ENCODE measurements at regions of chr11 and their contacts with region 1.

Region 1: DNA sequence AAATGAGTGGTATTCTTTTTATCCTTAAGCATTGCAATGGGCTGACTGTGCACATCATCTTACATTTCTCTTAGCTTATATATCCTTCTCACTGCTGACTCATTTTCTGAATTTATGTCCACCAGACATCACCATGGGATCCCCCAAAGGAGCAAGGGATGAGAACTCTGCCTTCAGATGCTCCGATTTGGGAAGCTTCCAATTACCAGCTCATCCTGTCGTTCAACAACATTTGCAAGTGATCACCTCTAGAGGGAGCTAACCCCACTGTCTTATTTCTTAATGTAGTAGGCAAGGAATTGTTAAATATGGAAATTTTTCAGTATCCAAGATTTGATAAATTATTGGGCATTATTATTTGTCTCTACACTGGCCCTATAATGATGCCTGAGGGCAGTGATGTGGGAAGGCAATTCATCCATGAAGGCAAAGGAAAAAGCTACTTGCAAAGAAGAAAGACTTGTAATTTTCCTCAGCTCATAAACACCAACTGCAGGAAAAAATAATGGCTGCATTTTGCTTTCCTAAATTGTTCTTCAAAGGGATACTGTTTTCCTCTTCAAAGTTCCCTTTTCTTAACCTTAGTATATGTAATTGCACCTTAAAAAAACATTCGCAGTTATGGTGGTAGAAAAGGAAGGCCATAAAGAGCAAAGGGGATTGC is 102.4 kb upstream of the FSHB start:
- DNase-seq: peak in 1 of 2 experiments; percentile 25
- H3K4me3 ChIP-seq: no peak overlapping the region
- H3K4me3 Mint-ChIP-seq: no peak overlapping the region
- H3K27ac Mint-ChIP-seq: no peak overlapping the region
- H3K4me1 ChIP-seq: no peaks in the 10 kb centered on the region
- H3K4me1 Mint-ChIP-seq: peaks cover 5% of the 10 kb centered on the region
- H3K27me3 ChIP-seq: no peaks in the 10 kb centered on the region
- H3K27me3 Mint-ChIP-seq: peaks cover 2% of the 10 kb centered on the region
- CTCF ChIP-seq: peak in 1 of 2 experiments; percentile 66

Region 2: DNA sequence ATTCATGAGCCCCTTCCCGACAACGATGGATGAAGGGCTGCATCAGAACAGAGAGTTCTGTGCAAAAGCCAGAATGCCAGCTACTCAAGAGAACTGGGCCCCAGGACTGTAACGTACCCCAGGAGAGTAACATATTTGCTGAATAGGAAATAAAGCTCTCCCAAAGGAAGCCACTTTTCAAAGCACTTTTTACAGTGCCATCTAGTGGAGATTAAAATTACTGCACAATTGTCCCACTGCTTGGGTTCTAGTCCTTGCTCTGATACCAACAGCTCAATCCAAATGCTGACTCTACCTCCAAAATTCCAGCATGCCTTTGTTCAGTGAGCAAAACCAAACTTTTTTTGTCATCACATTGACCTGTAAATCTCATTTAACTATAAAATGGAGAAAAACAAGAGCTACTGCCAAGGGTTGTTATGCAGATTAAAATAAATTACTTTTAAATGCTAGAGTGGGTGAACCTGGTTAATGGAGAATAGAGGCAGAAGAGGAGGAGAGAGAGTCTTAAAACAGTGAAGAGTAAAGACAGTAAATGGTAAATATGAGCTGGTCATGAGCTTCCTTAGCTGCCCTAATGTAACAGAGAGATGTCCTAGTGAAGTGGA is 14.8 kb after region 1 on chr11:
- CTCF ChIA-PET with region 1: interaction called, 15 read pairs
- POLR2A ChIA-PET with region 1: no interaction called
- intact Hi-C with region 1: no loop called
- DNase-seq: peak in 1 of 2 experiments; percentile 58
- H3K4me3 ChIP-seq: no peak overlapping the region
- H3K4me3 Mint-ChIP-seq: no peak overlapping the region
- H3K27ac Mint-ChIP-seq: no peak overlapping the region
- H3K4me1 ChIP-seq: no peaks in the 10 kb centered on the region
- H3K4me1 Mint-ChIP-seq: no peaks in the 10 kb centered on the region
- H3K27me3 ChIP-seq: no peaks in the 10 kb centered on the region
- H3K27me3 Mint-ChIP-seq: no peaks in the 10 kb centered on the region
- CTCF ChIP-seq: peak; percentile 53 to 72

Region 3: GRCh38 chr11:30196400-30197206 is 68.2 kb after region 1 on chr11:
- CTCF ChIA-PET with region 1: interaction called, 19 read pairs
- POLR2A ChIA-PET with region 1: no interaction called
- intact Hi-C with region 1: loop called (anchors 1 kb)
- DNase-seq: peak; percentile 65 to 70
- H3K4me3 ChIP-seq: no peak overlapping the region
- H3K4me3 Mint-ChIP-seq: no peak overlapping the region
- H3K27ac Mint-ChIP-seq: no peak overlapping the region
- H3K4me1 ChIP-seq: no peaks in the 10 kb centered on the region
- H3K4me1 Mint-ChIP-seq: no peaks in the 10 kb centered on the region
- H3K27me3 ChIP-seq: no peaks in the 10 kb centered on the region
- H3K27me3 Mint-ChIP-seq: no peaks in the 10 kb centered on the region
- CTCF ChIP-seq: peak; percentile 75 to 88

Region 4: GRCh38 chr11:30314625-30315024 is 186.2 kb after region 1 on chr11:
- CTCF ChIA-PET with region 1: interaction called, 3 read pairs
- POLR2A ChIA-PET with region 1: no interaction called
- intact Hi-C with region 1: loop called (anchors 1 kb)
- DNase-seq: no peak
- H3K4me3 ChIP-seq: no peak overlapping the region
- H3K4me3 Mint-ChIP-seq: no peak overlapping the region
- H3K27ac Mint-ChIP-seq: no peak overlapping the region
- H3K4me1 ChIP-seq: no peaks in the 10 kb centered on the region
- H3K4me1 Mint-ChIP-seq: no peaks in the 10 kb centered on the region
- H3K27me3 ChIP-seq: no peaks in the 10 kb centered on the region
- H3K27me3 Mint-ChIP-seq: no peaks in the 10 kb centered on the region
- CTCF ChIP-seq: peak; percentile 48 to 53

Region 5: DNA sequence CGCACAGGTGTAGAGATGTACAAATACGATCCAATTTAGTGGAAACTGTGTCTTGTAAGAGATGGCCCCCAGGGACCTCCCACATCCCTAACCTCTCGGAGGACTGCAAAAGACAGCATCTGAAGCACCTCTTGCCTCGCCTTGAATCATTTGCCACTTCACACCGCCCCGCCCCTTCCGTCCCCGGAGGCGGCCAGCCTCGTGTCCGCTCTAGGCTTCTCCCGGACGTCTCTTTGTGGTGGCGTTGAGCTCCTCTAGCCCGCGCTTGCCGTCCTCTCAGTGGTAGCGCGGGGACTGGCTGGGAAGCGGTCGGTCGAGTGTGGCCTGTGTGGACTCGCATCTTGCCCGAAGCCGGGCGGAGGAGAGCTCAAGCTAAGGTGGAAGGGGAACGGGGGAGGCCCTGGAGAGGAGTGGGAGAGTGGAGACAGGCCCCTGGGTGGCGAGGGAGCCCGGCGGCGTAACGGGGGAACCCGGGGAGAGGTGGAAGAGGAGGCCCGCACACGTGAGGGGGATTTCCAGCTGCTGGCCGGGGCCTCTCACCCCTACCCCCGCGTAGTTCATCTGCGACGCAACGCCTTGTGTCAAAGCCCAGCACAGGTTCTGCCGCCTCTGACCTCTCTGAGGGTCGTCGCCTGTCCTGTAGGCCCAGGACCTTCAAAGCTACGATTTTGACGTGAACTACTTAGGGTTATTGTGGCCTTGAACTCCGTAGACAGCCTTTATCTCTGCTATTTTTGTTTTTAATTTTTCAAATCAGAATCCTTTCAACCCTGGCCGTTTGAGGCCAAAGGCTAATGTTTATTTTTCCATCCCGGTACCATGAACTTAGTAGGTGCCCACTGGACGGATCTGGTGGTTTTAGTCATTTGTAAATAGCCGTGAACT is 194.7 kb after region 1 on chr11 and contains the start of gene ARL14EP:
- CTCF ChIA-PET with region 1: interaction called, 10 read pairs
- POLR2A ChIA-PET with region 1: interaction called, 6 read pairs
- intact Hi-C with region 1: no loop called
- DNase-seq: peak; percentile 95
- H3K4me3 ChIP-seq: peak within 1 kb of the TSS; percentile 71
- H3K4me3 Mint-ChIP-seq: peak within 1 kb of the TSS; percentile 100
- H3K27ac Mint-ChIP-seq: peak within 1 kb of the TSS; percentile 100
- H3K4me1 ChIP-seq: no peaks in the 10 kb centered on the region
- H3K4me1 Mint-ChIP-seq: peaks cover 6% of the 10 kb centered on the region
- H3K27me3 ChIP-seq: no peaks in the 10 kb centered on the region
- H3K27me3 Mint-ChIP-seq: peaks cover 8% of the 10 kb centered on the region
- CTCF ChIP-seq: no peak
- total RNA-seq, gene ARL14EP: 21.5 and 24.5 TPM in 2 replicates

Region 6: GRCh38 chr11:30333405-30333804 is 205.0 kb after region 1 on chr11:
- CTCF ChIA-PET with region 1: interaction called, 3 read pairs
- POLR2A ChIA-PET with region 1: no interaction called
- intact Hi-C with region 1: loop called (anchors 1 kb)
- DNase-seq: peak in 1 of 2 experiments; percentile 25
- H3K4me3 ChIP-seq: no peak overlapping the region
- H3K4me3 Mint-ChIP-seq: no peak overlapping the region
- H3K27ac Mint-ChIP-seq: no peak overlapping the region
- H3K4me1 ChIP-seq: no peaks in the 10 kb centered on the region
- H3K4me1 Mint-ChIP-seq: no peaks in the 10 kb centered on the region
- H3K27me3 ChIP-seq: no peaks in the 10 kb centered on the region
- H3K27me3 Mint-ChIP-seq: no peaks in the 10 kb centered on the region
- CTCF ChIP-seq: peak; percentile 38 to 70